Dorsolateral prefrontal cortex (tissue), 120 donors: ENCODE measurements at regions of chr1 and their contacts with region 1.

Region 1: GRCh38 chr1:46303038-46303871 is at the starts of genes LRRC41 and UQCRH:
- DNase-seq: peak; percentile 95 to 99 (median 97)
- H3K4me3 ChIP-seq: peak within 1 kb of the TSS; percentile 63 to 99 (median 93)
- H3K27ac ChIP-seq: peak within 1 kb of the TSS; percentile 58 to 99 (median 96)
- H3K27me3 ChIP-seq: no peaks in the 10 kb centered on the region
- CTCF ChIP-seq: peak in 21 of 56 donors; percentile 4 to 49 (median 14)
- total RNA-seq, gene LRRC41: 42.8 to 67.4 (median 56.1) TPM
- total RNA-seq, gene UQCRH: 114 to 365 (median 249) TPM

Region 2: GRCh38 chr1:46197964-46198811 is 105.1 kb before region 1 on chr1 and contains the start of gene POMGNT1:
- intact Hi-C with region 1: loop called in 1 of 2 experiments (anchors 10 kb)
- DNase-seq: peak in 6 of 10 donors; percentile 39 to 86 (median 65)
- H3K4me3 ChIP-seq: peak within 1 kb of the TSS; percentile 64 to 92 (median 85)
- H3K27ac ChIP-seq: peak within 1 kb of the TSS; percentile 58 to 98 (median 90)
- H3K27me3 ChIP-seq: no peaks in the 10 kb centered on the region
- CTCF ChIP-seq: peak in 8 of 56 donors; percentile 8 to 28 (median 18)
- total RNA-seq, gene POMGNT1: 58.7 to 145 (median 92.1) TPM

Region 3: GRCh38 chr1:46247436-46248121 is 55.7 kb before region 1 on chr1 and contains the start of gene RAD54L:
- intact Hi-C with region 1: loop called (anchors 2 to 5 kb)
- DNase-seq: peak; percentile 91 to 98 (median 98)
- H3K4me3 ChIP-seq: peak within 1 kb of the TSS; percentile 57 to 98 (median 76)
- H3K27ac ChIP-seq: peak within 1 kb of the TSS in 17 of 59 donors; percentile 8 to 76 (median 41)
- H3K27me3 ChIP-seq: no peaks in the 10 kb centered on the region
- CTCF ChIP-seq: peak in 3 of 56 donors; percentile 10 to 18 (median 13)
- total RNA-seq, gene RAD54L: 0.89 to 10.5 (median 4.8) TPM